MCF 10A (cell line): ENCODE measurements at regions of chr1 and their contacts with region 1.

Region 1: DNA sequence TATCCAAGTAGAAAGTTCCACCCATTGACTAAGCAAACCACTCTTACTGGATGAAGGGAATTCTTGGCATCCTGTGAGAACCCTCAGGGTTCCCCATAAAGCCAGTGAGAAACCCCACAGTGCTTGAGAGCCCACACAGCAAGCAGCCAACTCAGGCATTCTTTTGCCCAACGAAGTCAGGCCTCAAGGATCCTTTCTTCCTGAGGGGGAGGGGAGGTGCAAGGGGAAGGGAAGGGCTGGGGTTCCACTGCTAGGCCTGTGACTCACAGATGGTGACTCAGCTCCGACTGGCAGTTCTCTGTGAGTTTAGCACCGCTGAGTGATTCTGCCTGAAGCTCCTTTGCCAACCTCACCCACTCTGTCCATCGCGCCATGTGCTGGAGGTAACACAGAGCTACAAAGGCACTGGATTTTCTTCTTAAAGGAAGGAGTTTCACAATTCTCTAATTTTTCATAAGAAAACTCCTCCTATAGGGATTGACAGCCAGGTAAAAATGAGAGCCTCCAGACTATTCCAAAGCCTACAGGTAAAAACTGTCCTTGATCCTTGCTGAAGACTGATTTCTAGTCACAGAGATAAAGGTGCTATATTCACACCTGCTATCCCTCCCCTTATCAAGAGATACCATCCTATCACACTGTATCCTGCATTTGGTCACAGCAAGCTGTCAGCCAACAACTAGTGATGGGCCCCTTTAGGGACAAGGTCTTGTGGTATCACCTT is 4.8 kb downstream of the ENO1 start:
- DNase-seq: peak; percentile 99
- H3K4me3 Mint-ChIP-seq: peak overlapping the region; percentile 84
- H3K27ac Mint-ChIP-seq: peak overlapping the region; percentile 31
- H3K4me1 Mint-ChIP-seq: peaks cover 47% of the 10 kb centered on the region
- H3K27me3 Mint-ChIP-seq: no peaks in the 10 kb centered on the region
- CTCF ChIP-seq: no peak

Region 2: GRCh38 chr1:8858888-8859706 is 14.6 kb before region 1 on chr1:
- CTCF ChIA-PET with region 1: interaction called, 13 read pairs
- POLR2A ChIA-PET with region 1: interaction called, 103 read pairs
- intact Hi-C with region 1: no loop called
- DNase-seq: peak; percentile 65
- H3K4me3 Mint-ChIP-seq: no peak overlapping the region
- H3K27ac Mint-ChIP-seq: peak overlapping the region; percentile 66
- H3K4me1 Mint-ChIP-seq: no peaks in the 10 kb centered on the region
- H3K27me3 Mint-ChIP-seq: no peaks in the 10 kb centered on the region
- CTCF ChIP-seq: peak; percentile 45

Region 3: GRCh38 chr1:8889925-8890785 is 16.5 kb after region 1 on chr1:
- CTCF ChIA-PET with region 1: interaction called, 3 read pairs
- POLR2A ChIA-PET with region 1: interaction called, 63 read pairs
- intact Hi-C with region 1: loop called (anchors 2 kb)
- DNase-seq: peak; percentile 97
- H3K4me3 Mint-ChIP-seq: peak overlapping the region; percentile 67
- H3K27ac Mint-ChIP-seq: peak overlapping the region; percentile 94
- H3K4me1 Mint-ChIP-seq: peaks cover 18% of the 10 kb centered on the region
- H3K27me3 Mint-ChIP-seq: no peaks in the 10 kb centered on the region
- CTCF ChIP-seq: no peak

Region 4: DNA sequence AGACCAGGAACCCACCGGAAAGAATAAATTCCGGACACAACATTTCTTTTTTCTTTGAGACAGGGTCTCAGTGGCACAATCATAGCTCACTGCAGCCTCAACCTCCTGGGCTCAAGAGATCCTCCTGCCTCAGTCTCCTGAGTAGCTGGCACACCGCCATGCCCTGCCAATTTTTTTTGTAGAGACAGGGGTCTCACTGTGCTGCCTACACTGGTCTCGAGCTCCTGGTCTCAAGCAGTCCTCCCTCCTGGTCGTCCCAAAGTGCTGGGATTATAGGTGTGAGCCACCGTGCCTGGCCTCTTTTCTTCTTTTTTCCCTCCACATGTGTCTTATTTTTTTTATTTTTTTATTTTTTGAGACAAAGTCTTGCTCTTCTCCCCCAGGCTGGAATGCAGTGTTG is 25.4 kb after region 1 on chr1:
- CTCF ChIA-PET with region 1: interaction called, 3 read pairs
- POLR2A ChIA-PET with region 1: interaction called, 125 read pairs
- intact Hi-C with region 1: loop called (anchors 1 kb)
- DNase-seq: no peak
- H3K4me3 Mint-ChIP-seq: no peak overlapping the region
- H3K27ac Mint-ChIP-seq: peak overlapping the region; percentile 90
- H3K4me1 Mint-ChIP-seq: peaks cover 24% of the 10 kb centered on the region
- H3K27me3 Mint-ChIP-seq: no peaks in the 10 kb centered on the region
- CTCF ChIP-seq: no peak

Region 5: GRCh38 chr1:8903908-8904650 is 30.4 kb after region 1 on chr1:
- CTCF ChIA-PET with region 1: interaction called, 3 read pairs
- POLR2A ChIA-PET with region 1: interaction called, 125 read pairs
- intact Hi-C with region 1: loop called (anchors 1 kb)
- DNase-seq: peak; percentile 98
- H3K4me3 Mint-ChIP-seq: peak overlapping the region; percentile 21
- H3K27ac Mint-ChIP-seq: no peak overlapping the region
- H3K4me1 Mint-ChIP-seq: peaks cover 41% of the 10 kb centered on the region
- H3K27me3 Mint-ChIP-seq: no peaks in the 10 kb centered on the region
- CTCF ChIP-seq: no peak

Region 6: GRCh38 chr1:8910914-8911313 is 37.2 kb after region 1 on chr1:
- CTCF ChIA-PET with region 1: interaction called, 4 read pairs
- POLR2A ChIA-PET with region 1: interaction called, 125 read pairs
- intact Hi-C with region 1: loop called (anchors 5 kb)
- DNase-seq: peak; percentile 44
- H3K4me3 Mint-ChIP-seq: no peak overlapping the region
- H3K27ac Mint-ChIP-seq: peak overlapping the region; percentile 75
- H3K4me1 Mint-ChIP-seq: peaks cover 24% of the 10 kb centered on the region
- H3K27me3 Mint-ChIP-seq: no peaks in the 10 kb centered on the region
- CTCF ChIP-seq: no peak

Region 7: DNA sequence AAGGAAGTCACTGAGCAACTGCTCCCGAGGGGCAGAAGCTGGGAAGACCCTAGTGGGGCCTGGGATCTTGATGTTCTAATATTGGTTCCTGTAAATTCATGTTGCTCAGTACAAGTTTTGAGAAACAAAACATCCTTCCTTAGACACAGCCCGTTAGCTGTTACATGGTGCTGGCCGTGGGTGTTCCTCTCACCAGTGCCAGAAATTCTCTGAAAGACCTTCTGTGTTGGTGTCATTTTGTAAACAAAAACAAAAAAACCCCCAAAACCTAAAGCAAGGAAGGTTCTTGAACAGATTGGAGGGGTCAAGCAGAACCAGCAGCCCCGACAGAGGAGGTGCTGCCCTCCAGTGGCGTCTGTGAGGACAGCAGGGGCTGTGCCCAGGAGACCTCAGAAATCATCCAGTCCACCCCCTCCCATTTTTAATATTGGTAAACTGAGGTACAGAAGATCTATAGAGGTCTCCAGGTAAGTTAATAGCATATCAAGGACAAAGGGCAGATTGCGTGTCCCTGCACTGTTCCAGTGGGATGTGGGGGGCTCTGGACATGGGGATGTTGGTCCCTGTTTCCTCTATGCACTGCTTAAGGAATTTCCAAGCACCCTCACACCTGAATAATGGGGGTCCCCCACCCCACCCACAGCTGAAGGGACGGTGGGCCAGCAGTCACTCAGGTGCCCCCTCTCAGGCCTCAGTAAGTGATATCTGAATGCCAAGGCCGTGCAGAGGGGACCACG is 114.4 kb after region 1 on chr1:
- CTCF ChIA-PET with region 1: interaction called, 4 read pairs
- POLR2A ChIA-PET with region 1: interaction called, 10 read pairs
- intact Hi-C with region 1: loop called (anchors 5 kb)
- DNase-seq: peak; percentile 59
- H3K4me3 Mint-ChIP-seq: no peak overlapping the region
- H3K27ac Mint-ChIP-seq: no peak overlapping the region
- H3K4me1 Mint-ChIP-seq: peaks cover 12% of the 10 kb centered on the region
- H3K27me3 Mint-ChIP-seq: no peaks in the 10 kb centered on the region
- CTCF ChIP-seq: peak; percentile 94

Region 8: DNA sequence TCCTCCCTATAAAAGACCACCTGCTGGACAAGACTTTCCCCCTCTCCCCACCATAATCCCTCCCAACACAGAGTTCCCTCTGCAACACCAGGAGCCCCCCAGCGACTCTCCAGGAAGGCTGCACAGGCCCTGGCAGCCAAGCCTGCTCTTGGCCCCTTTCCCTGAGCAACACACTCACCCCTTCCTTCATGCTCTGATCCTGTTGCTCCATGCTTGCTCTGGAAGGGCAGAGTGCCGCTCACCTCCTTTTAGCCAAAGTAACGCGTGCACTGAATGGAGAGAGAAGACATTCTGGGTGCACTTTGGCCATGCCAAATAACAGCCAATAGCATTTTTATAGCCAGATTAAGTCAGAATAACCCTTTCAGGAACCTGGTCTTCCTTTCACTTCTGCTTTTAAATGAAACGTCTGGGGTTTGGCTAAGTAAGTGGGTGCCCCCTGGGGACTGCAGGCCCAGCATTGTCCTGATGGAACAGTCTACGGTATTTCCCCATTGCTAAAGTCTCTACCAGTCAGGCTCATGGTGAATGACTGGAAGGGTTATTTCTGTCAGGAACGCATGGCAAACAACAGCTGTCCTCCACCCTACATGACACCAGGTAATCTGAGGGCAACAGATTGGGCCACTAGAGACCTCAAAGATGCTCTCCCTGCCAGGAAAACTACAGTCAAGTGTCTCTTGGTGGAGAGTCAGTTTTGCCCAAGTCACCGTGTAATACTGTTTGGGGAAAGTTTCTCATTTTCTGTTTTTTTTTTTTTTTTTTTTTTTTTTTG is 195.8 kb after region 1 on chr1 and contains the start of gene SLC2A5:
- CTCF ChIA-PET with region 1: no interaction called
- POLR2A ChIA-PET with region 1: no interaction called
- intact Hi-C with region 1: no loop called
- DNase-seq: no peak
- H3K4me3 Mint-ChIP-seq: no peak within 1 kb of the TSS
- H3K27ac Mint-ChIP-seq: peak within 1 kb of the TSS; percentile 64
- H3K4me1 Mint-ChIP-seq: peaks cover 7% of the 10 kb centered on the region
- H3K27me3 Mint-ChIP-seq: no peaks in the 10 kb centered on the region
- CTCF ChIP-seq: no peak
- total RNA-seq, gene SLC2A5: 0.39 and 0.61 TPM in 2 replicates

Region 9: DNA sequence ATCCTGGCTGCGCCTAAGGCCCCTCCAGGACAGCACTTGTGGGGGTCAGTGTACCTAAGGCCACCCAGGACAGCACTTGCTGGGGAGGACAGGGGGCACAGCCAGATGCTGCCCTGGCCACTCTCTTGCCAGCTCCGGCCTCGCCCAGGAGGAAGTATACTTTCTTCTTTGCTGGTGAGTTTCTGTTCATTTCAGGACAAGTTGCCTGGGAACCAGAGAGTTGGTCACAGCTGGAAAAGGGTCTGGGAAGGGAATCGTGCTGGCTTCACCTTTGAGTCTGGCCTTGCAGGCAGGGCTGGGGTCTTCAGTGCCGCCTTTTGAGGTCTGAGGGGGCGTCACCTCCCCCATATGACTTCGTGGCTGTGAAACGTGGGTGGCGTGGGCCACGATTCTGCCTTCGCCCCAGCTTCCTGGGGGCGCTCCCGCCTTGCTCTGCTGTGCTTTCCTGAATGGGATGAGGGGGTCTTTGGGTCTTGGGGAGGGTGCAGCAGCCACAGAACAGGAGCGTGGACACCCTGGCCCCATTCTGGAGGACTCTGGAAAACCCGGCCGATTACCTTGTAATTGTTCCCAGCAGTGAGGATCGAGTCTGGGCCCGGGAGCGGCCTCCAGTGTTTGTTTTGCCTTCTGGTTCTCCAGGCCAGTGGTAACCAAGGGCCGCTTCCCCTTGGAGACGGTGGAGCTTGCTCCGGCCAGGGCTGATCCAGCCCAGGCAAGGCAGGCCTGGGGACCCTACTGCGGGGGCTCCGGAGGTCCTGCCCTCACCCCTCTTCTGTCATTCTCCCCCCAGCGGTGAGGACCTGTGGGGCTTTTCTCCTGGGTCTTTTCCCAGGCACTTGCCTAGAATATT is 465.0 kb after region 1 on chr1:
- CTCF ChIA-PET with region 1: no interaction called
- POLR2A ChIA-PET with region 1: no interaction called
- intact Hi-C with region 1: no loop called
- DNase-seq: no peak
- H3K4me3 Mint-ChIP-seq: no peak overlapping the region
- H3K27ac Mint-ChIP-seq: peak overlapping the region; percentile 35
- H3K4me1 Mint-ChIP-seq: no peaks in the 10 kb centered on the region
- H3K27me3 Mint-ChIP-seq: no peaks in the 10 kb centered on the region
- CTCF ChIP-seq: no peak